Astrocyte of the cerebellum (primary cell): ENCODE measurements at regions of chr15 and their contacts with region 1.

Region 1: DNA sequence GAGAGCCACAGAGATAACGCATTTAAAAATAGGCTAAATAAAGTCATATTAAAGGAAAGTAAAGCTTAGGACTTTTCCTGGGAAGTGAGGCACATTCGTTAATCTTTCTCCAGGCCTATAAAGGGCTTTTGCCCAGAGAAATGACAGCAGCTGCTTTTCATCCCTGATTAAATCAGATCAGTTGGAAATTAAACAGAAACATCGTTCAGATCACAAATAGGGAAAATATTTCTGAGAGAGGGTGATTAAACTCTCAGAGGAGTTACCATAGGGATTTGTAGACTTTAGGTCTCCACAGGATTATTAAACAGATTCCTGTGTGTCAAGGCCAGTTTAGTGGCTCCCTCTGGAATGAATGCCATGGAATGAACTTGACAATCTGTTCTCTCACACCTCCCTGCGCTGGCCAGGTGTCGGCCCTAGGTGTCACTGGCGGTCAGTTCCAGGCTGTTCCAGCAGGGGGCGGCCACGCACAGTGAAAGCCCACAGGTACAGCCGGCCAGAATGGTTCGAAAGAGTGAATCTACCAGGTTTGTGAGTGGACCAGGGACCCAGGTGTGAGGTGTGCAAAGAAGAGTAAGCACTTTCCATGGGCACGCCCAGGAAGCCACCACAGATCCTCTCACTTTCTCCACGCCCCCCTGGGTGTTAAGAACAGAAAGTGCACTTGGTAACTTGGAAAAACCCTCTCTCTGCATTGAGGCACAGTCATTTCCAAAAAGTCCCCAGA is 253.0 kb upstream of the RASGRP1 start:
- DNase-seq: peak; percentile 33
- H3K4me3 ChIP-seq: no peak overlapping the region
- CTCF ChIP-seq: peak; percentile 99

Region 2: GRCh38 chr15:38758043-38758442 is 59.5 kb before region 1 on chr15:
- in situ Hi-C with region 1: loop called (anchors 10 kb)
- DNase-seq: peak; percentile 47
- H3K4me3 ChIP-seq: no peak overlapping the region
- CTCF ChIP-seq: no peak

Region 3: GRCh38 chr15:39579487-39580116 is 762.0 kb after region 1 on chr15:
- in situ Hi-C with region 1: loop called (anchors 5 kb)
- DNase-seq: peak; percentile 70
- H3K4me3 ChIP-seq: peak overlapping the region; percentile 77
- CTCF ChIP-seq: no peak